Common myeloid progenitor, CD34-positive (primary cell): ENCODE measurements at regions of chr21 and their contacts with region 1.

Region 1: GRCh38 chr21:42309753-42310221 is 5.4 kb downstream of the TFF3 start:
- DNase-seq: peak; percentile 63 to 89 (median 87)
- H3K4me3 ChIP-seq: peak overlapping the region in 5 of 7 experiments; percentile 23 to 62 (median 46)
- H3K27ac ChIP-seq: no peak overlapping the region
- H3K4me1 ChIP-seq: peaks cover 13 to 51% (median 46%) of the 10 kb centered on the region in 4 experiments
- H3K27me3 ChIP-seq: no peaks in the 10 kb centered on the region

Region 2: DNA sequence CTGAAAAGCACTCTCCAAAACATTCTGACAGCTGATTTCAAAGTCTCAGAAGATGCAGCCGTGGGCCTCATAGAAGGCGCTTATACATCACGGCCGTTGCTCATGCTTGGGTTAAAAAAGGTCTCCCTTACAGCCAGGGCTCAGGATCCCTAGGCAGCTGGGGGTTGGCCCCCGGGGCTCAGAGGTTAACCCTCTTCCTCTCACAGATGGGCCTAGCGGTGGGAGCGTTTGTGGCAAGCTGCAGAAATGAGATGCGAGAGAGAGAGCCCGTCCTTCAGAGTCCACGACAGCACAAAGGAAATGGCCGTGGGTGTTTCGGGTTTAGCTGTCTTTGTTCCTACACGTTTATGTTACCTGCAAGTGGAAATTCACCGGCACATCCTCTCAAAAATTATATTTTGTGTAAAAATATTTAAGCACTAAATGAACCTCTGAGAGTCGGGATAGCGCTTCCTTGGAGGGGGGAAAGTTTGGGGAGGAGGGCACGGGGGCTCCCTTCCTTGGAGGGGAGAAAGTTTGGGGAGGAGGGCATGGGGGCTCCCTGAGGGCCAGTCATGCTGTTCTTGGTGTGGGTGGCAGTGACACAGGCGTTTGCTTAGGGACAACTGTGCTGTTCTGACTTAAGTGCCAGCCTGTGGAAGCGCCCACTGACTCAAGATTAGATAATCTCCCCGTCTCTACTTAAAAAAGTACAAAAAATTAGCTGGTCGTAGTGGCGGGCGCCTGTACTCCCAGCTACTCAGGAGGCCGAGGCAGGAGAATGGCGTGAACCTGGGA is 410.2 kb before region 1 on chr21:
- CTCF ChIA-PET with region 1: no interaction called
- POLR2A ChIA-PET with region 1: no interaction called
- DNase-seq: peak in 2 of 3 donors; percentile 31 to 63
- H3K4me3 ChIP-seq: no peak overlapping the region
- H3K27ac ChIP-seq: no peak overlapping the region
- H3K4me1 ChIP-seq: peaks cover 10 to 41% (median 30%) of the 10 kb centered on the region in 4 experiments
- H3K27me3 ChIP-seq: no peaks in the 10 kb centered on the region

Region 3: DNA sequence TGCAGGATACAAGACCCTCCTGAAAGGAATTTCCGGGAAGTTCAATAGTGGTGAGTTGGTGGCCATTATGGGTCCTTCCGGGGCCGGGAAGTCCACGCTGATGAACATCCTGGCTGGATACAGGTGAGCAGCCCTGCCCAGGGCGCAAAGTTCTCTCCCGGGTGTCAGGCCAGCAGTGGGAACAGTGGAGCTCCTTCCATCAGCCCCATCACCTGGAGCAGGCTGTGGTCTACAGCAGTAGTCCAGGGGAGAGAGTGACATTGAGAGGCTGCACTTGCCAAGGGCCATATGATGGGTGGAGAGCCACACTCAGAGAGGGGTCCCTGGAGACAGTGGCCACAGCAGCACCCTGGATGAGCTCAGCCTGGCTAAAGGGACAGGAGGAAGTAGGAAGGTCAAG is 38.7 kb before region 1 on chr21:
- CTCF ChIA-PET with region 1: interaction called, 10 read pairs
- POLR2A ChIA-PET with region 1: no interaction called
- DNase-seq: no peak
- H3K4me3 ChIP-seq: no peak overlapping the region
- H3K27ac ChIP-seq: no peak overlapping the region
- H3K4me1 ChIP-seq: peaks cover 0 to 45% (median 38%) of the 10 kb centered on the region in 4 experiments
- H3K27me3 ChIP-seq: no peaks in the 10 kb centered on the region

Region 4: GRCh38 chr21:42299324-42300044 is 10.3 kb before region 1 on chr21:
- CTCF ChIA-PET with region 1: interaction called, 21 read pairs
- POLR2A ChIA-PET with region 1: no interaction called
- DNase-seq: no peak
- H3K4me3 ChIP-seq: no peak overlapping the region
- H3K27ac ChIP-seq: no peak overlapping the region
- H3K4me1 ChIP-seq: peaks cover 0 to 33% (median 17%) of the 10 kb centered on the region in 4 experiments
- H3K27me3 ChIP-seq: no peaks in the 10 kb centered on the region

Region 5: GRCh38 chr21:42353623-42354022 is 43.8 kb after region 1 on chr21:
- CTCF ChIA-PET with region 1: no interaction called
- POLR2A ChIA-PET with region 1: no interaction called
- DNase-seq: no peak
- H3K4me3 ChIP-seq: no peak overlapping the region
- H3K27ac ChIP-seq: no peak overlapping the region
- H3K4me1 ChIP-seq: no peaks in the 10 kb centered on the region
- H3K27me3 ChIP-seq: peaks cover 0 to 2% (median 0%) of the 10 kb centered on the region in 5 experiments

Region 6: DNA sequence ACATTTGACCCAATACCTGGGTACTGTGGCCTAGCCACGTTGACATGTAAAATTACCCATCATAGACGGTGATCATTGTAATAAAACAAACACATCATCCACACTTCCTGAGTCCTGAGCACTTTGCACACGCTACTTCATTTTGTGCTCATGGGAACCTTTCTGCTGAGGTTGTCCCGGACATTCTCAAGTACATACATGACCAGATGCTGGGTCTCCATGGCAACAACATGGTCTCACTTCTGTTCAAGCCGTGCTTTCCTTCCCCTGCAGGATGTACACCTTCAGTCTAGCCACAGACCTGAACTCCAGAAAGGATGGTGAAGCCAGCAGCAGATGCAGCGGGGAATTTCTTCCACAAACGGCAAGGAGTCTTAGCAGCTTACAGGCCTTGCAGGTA is 116.6 kb after region 1 on chr21:
- CTCF ChIA-PET with region 1: interaction called, 11 read pairs
- POLR2A ChIA-PET with region 1: no interaction called
- DNase-seq: no peak
- H3K4me3 ChIP-seq: no peak overlapping the region
- H3K27ac ChIP-seq: no peak overlapping the region
- H3K4me1 ChIP-seq: peaks cover 22 to 45% (median 34%) of the 10 kb centered on the region in 4 experiments
- H3K27me3 ChIP-seq: peaks cover 0 to 18% (median 0%) of the 10 kb centered on the region in 5 experiments